MCF 10A (cell line): ENCODE measurements at regions of chrX and their contacts with region 1.

Region 1: DNA sequence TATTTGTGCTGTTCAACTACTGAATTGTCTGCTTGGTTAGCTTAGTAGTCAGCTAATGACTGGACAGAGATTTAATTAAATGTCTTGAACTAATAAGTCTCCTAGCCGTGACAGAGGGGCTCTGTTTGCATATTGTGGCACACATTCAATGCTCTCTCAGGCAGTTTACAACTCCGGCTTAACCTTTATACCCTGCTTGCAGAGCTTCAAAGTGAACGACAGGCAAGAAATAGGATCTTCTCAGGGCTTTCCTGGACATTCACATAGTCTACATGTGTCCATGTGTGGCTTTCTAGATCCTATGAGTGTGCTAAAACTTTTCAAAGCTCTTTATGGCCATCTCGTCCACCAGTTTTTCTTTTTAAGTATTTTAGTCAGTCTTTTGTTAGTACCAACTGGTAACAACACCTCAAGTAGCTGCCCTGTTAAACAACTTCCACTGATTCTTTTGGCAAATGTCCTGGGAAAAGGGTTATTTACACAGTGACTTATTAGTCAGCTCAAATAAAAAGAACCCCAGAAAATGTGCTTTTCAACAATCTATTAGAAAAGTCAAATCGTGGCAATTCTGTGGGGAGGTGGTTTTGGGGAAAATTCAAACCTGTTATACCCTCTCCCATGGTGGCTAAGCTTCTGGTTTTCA is 28.6 kb downstream of the OR13H1 start:
- DNase-seq: no peak
- H3K4me3 Mint-ChIP-seq: no peak overlapping the region
- H3K27ac Mint-ChIP-seq: no peak overlapping the region
- H3K4me1 Mint-ChIP-seq: no peaks in the 10 kb centered on the region
- H3K27me3 Mint-ChIP-seq: peaks cover 66% of the 10 kb centered on the region
- CTCF ChIP-seq: no peak

Region 2: GRCh38 chrX:131025336-131025735 is 547.2 kb before region 1 on chrX:
- CTCF ChIA-PET with region 1: no interaction called
- POLR2A ChIA-PET with region 1: no interaction called
- intact Hi-C with region 1: no loop called
- DNase-seq: no peak
- H3K4me3 Mint-ChIP-seq: no peak overlapping the region
- H3K27ac Mint-ChIP-seq: no peak overlapping the region
- H3K4me1 Mint-ChIP-seq: no peaks in the 10 kb centered on the region
- H3K27me3 Mint-ChIP-seq: peaks cover 84% of the 10 kb centered on the region
- CTCF ChIP-seq: no peak

Region 3: GRCh38 chrX:131595120-131595519 is 22.6 kb after region 1 on chrX:
- CTCF ChIA-PET with region 1: no interaction called
- POLR2A ChIA-PET with region 1: no interaction called
- intact Hi-C with region 1: loop called (anchors 1 kb)
- DNase-seq: peak; percentile 68
- H3K4me3 Mint-ChIP-seq: no peak overlapping the region
- H3K27ac Mint-ChIP-seq: no peak overlapping the region
- H3K4me1 Mint-ChIP-seq: peaks cover 4% of the 10 kb centered on the region
- H3K27me3 Mint-ChIP-seq: peaks cover 36% of the 10 kb centered on the region
- CTCF ChIP-seq: no peak

Region 4: DNA sequence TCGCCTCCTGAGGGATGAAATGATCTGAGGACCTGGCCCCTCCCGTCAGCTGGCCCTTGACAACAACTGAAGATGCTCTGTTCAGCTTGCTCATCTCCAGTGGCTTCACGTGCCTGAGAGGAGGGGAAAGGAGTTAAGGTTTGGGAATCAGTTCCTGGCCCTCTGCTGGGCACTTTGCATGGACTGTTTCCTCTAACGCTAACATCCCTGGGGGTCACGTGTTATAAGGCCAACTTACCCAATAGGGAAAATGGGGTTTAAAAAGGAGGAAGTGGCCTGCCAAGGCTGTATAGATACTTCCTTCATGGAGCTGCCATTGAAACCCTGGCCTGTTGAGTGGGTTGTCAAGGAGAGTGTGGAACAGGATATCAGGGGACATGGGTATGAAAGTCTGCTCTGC is 37.0 kb after region 1 on chrX:
- CTCF ChIA-PET with region 1: no interaction called
- POLR2A ChIA-PET with region 1: no interaction called
- intact Hi-C with region 1: no loop called
- DNase-seq: no peak
- H3K4me3 Mint-ChIP-seq: no peak overlapping the region
- H3K27ac Mint-ChIP-seq: no peak overlapping the region
- H3K4me1 Mint-ChIP-seq: peaks cover 6% of the 10 kb centered on the region
- H3K27me3 Mint-ChIP-seq: peaks cover 46% of the 10 kb centered on the region
- CTCF ChIP-seq: no peak